ENCODE measurements at regions of chr11 and their contacts with region 1.

Region 1: GRCh38 chr11:118342503-118343161 is at the start of gene CD3D:
- DNase-seq: no peak
- H3K4me3 ChIP-seq: no peak within 1 kb of the TSS
- H3K27ac ChIP-seq: no peak within 1 kb of the TSS
- H3K4me1 ChIP-seq: no peaks in the 10 kb centered on the region
- H3K27me3 ChIP-seq: peaks cover 0 to 35% of the 10 kb centered on the region in 2 donors
- CTCF ChIP-seq: no peak

Region 2: DNA sequence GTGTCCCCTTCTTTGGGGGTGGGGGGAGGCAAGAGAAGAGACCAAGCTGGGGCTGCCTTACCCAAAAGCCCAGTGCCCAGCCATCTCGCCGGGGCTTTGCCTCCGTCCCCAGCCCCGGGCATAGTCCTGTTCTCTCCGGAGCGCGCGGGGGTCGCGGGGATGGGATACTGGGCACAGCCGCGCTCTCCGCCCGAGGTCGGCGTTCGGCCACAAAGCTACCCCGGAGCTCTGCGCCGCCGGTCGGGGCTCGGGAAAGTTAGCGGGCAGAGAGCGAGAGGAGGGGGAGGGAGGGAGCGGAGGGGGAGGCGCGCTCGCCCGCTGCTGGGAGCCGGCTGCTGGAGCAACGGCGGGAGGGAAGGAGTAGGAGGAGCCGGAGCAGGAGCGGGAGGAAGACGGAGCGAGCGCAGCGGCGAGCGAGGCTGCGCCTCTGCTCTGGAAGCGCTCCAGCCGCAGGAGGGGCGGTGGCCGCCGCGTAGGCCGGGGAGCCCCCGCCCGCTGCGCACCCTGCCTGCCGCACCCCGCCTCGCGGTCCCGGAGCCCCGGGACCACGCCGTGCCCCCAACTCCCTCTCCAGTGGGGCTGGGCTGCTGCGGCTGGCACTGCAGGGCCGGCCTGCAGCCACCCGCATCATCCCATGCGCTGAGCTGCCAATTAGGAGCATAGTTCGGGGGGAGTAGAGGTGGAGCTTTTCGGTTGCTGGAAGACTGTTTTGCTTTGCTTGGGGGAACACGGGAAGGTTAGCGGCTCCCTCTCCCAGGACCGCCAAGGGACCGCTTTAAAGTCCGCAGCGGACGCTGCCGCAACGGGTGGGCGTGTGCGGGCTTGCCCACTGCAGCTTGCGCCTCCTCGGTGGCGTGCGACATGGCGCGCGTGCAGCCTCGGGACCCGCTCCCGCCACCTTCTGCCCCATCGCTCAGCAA is 189.8 kb before region 1 on chr11 and contains the start of gene SCN4B:
- intact Hi-C with region 1: loop called (anchors 10 kb)
- DNase-seq: no peak
- H3K4me3 ChIP-seq: peak within 1 kb of the TSS; percentile 44 to 60
- H3K27ac ChIP-seq: no peak within 1 kb of the TSS
- H3K4me1 ChIP-seq: peaks cover 0 to 24% (median 16%) of the 10 kb centered on the region in 4 donors
- H3K27me3 ChIP-seq: peaks cover 0 to 75% of the 10 kb centered on the region in 2 donors
- CTCF ChIP-seq: no peak

Measured in tibial artery (tissue), 4 donors.